Dorsolateral prefrontal cortex (tissue), 120 donors: ENCODE measurements at regions of chr2 and their contacts with region 1.

Region 1: GRCh38 chr2:161414042-161415033 is 1.8 kb upstream of the TBR1 start:
- DNase-seq: peak in 4 of 10 donors; percentile 17 to 70 (median 48)
- H3K4me3 ChIP-seq: peak overlapping the region; percentile 43 to 77 (median 63)
- H3K27ac ChIP-seq: peak overlapping the region in 58 of 59 donors; percentile 40 to 94 (median 80)
- H3K27me3 ChIP-seq: peaks cover 0 to 50% (median 33%) of the 10 kb centered on the region in 45 donors
- CTCF ChIP-seq: peak in 13 of 56 donors; percentile 2 to 40 (median 18)

Region 2: DNA sequence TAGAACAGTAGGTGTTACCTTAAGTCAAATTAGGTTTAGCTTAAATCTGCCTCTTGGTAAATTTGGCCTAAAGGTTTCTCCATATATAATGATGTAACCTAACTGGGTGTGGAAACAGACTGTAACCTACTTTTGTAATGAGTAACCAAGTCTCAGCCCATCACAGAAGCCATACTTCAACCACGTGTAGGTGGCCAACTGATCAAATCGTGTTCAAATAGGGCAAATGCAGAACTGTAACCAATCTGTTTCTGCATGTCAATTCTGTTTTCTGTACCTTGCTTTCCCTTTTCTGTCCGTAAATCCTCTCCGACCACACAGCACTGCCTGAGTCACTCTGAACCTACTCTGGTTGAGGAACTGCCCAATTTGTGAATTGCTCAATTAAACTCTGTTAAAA is 1317.9 kb before region 1 on chr2:
- intact Hi-C with region 1: no loop called
- DNase-seq: no peak
- H3K4me3 ChIP-seq: no peak overlapping the region
- H3K27ac ChIP-seq: no peak overlapping the region
- H3K27me3 ChIP-seq: no peaks in the 10 kb centered on the region
- CTCF ChIP-seq: no peak

Region 3: GRCh38 chr2:161178756-161179155 is 235.6 kb before region 1 on chr2:
- intact Hi-C with region 1: no loop called
- DNase-seq: no peak
- H3K4me3 ChIP-seq: no peak overlapping the region
- H3K27ac ChIP-seq: no peak overlapping the region
- H3K27me3 ChIP-seq: no peaks in the 10 kb centered on the region
- CTCF ChIP-seq: no peak

Region 4: GRCh38 chr2:161238560-161239325 is 175.6 kb before region 1 on chr2:
- intact Hi-C with region 1: loop called in 1 of 2 experiments (anchors 10 kb)
- DNase-seq: peak; percentile 84 to 93 (median 90)
- H3K4me3 ChIP-seq: peak overlapping the region; percentile 48 to 89 (median 70)
- H3K27ac ChIP-seq: peak overlapping the region; percentile 82 to 97 (median 93)
- H3K27me3 ChIP-seq: no peaks in the 10 kb centered on the region
- CTCF ChIP-seq: peak in 11 of 56 donors; percentile 0 to 27 (median 10)

Region 5: DNA sequence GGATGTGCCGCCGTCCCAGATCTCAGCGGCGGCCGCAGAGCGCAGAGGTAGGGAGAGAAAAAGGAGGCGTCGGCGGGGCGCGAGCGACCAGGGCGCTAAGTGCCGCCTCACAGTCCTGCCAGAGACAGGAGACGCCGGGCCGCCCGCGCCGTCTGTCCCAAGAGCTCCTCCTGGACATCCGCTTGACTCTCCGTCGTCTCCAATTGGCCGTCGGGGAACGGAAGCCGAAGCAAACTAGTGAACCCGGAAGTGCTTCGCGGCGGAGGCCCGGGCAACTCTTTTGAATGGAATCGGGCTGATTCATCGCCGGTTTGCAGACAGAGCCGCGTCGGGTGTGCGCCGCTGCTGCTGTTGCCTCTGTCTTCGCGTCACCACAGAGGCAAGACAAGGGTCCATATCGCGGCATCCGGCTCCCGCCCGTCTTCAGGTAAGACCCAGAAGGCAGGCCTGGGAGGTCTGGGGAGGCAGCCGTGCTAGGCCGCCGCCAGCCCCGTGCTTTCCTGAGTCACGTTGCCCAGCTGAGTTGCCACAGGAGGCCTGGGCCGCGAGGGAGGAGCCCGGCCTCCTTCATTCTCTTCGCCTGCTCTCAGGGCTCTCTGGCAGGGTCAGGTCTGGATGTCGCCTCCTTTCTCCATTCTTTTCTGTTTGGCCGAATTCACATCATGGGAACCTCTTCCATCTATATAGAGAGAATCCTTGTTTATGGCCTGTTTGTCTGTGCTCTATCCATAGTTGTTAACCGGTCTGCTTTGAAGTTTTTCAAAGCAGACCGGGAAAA is 106.0 kb before region 1 on chr2 and contains the start of gene PSMD14:
- intact Hi-C with region 1: loop called in 1 of 2 experiments (anchors 5 kb)
- DNase-seq: peak; percentile 84 to 95 (median 90)
- H3K4me3 ChIP-seq: peak within 1 kb of the TSS; percentile 58 to 95 (median 80)
- H3K27ac ChIP-seq: peak within 1 kb of the TSS in 57 of 59 donors; percentile 30 to 94 (median 79)
- H3K27me3 ChIP-seq: no peaks in the 10 kb centered on the region
- CTCF ChIP-seq: peak in 19 of 56 donors; percentile 5 to 46 (median 29)
- total RNA-seq, gene PSMD14: 31.1 to 68.1 (median 53.3) TPM

Region 6: DNA sequence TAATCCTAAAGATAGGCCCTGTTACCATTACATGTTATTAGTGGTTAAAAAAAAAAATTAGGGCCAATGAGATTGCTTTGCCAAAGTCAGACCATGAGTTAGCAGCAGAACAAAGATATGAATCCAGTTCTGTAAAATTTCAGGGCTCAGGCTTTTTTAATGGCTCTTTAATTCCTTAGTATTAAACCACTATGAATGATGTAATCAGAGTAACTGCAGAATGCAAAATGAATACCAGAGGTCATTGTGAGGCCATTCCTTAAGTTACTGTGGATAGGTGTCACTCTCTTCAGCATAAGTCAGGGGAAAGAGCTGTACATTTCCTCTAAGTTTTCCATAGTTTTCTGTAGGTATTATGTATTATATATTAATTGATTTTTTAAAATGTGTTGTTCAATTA is 40.4 kb before region 1 on chr2:
- intact Hi-C with region 1: loop called in 1 of 2 experiments (anchors 5 kb)
- DNase-seq: no peak
- H3K4me3 ChIP-seq: no peak overlapping the region
- H3K27ac ChIP-seq: no peak overlapping the region
- H3K27me3 ChIP-seq: no peaks in the 10 kb centered on the region
- CTCF ChIP-seq: no peak